ENCODE measurements at regions of chr14 and their contacts with region 1.

Region 1: GRCh38 chr14:65949711-65950516 is 536.3 kb upstream of the CCDC196 start:
- DNase-seq: no peak
- H3K4me3 ChIP-seq: peak overlapping the region; percentile 13
- H3K4me3 Mint-ChIP-seq: peak overlapping the region in 6 of 7 donors; percentile 23 to 61 (median 42)
- H3K27ac ChIP-seq: no peak overlapping the region
- H3K27ac Mint-ChIP-seq: peak overlapping the region in 6 of 8 donors; percentile 3 to 54 (median 34)
- H3K4me1 ChIP-seq: peaks cover 18% of the 10 kb centered on the region
- H3K4me1 Mint-ChIP-seq: peaks cover 32 to 45% (median 38%) of the 10 kb centered on the region in 3 donors
- H3K27me3 ChIP-seq: no peaks in the 10 kb centered on the region
- H3K27me3 Mint-ChIP-seq: peaks cover 0 to 4% of the 10 kb centered on the region in 2 donors

Region 2: DNA sequence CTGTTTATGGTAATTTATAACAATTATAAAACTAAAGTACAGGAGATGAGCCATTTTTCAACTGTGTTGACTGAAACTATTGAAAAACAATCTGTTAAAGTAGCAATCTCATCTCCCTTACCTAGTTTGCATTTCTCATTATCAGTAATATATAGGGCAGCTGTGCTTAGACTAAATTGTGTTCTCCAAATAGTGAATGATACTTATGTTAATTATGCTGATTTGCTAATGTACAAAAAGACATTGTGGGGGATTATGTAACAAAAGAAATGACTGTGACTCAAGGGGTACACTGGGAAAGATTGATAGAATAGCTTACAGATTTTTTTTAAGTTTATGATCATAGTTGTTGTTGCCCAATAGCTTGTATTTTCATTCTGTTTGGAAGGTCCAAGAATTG is 329.7 kb before region 1 on chr14:
- CTCF ChIA-PET with region 1: no interaction called
- POLR2A ChIA-PET with region 1: no interaction called
- DNase-seq: no peak
- H3K4me3 ChIP-seq: no peak overlapping the region
- H3K4me3 Mint-ChIP-seq: no peak overlapping the region
- H3K27ac ChIP-seq: no peak overlapping the region
- H3K27ac Mint-ChIP-seq: peak overlapping the region in 2 of 8 donors; percentile 3 to 46
- H3K4me1 ChIP-seq: no peaks in the 10 kb centered on the region
- H3K4me1 Mint-ChIP-seq: peaks cover 7 to 11% (median 9%) of the 10 kb centered on the region in 3 donors
- H3K27me3 ChIP-seq: no peaks in the 10 kb centered on the region
- H3K27me3 Mint-ChIP-seq: no peaks in the 10 kb centered on the region

Region 3: GRCh38 chr14:65927931-65928356 is 22.0 kb before region 1 on chr14:
- CTCF ChIA-PET with region 1: interaction called, 13 read pairs
- POLR2A ChIA-PET with region 1: no interaction called
- DNase-seq: peak; percentile 44 to 84 (median 67)
- H3K4me3 ChIP-seq: peak overlapping the region; percentile 47
- H3K4me3 Mint-ChIP-seq: peak overlapping the region; percentile 18 to 90 (median 70)
- H3K27ac ChIP-seq: peak overlapping the region; percentile 16
- H3K27ac Mint-ChIP-seq: peak overlapping the region; percentile 73 to 98 (median 86)
- H3K4me1 ChIP-seq: peaks cover 53% of the 10 kb centered on the region
- H3K4me1 Mint-ChIP-seq: peaks cover 67 to 82% (median 77%) of the 10 kb centered on the region in 3 donors
- H3K27me3 ChIP-seq: no peaks in the 10 kb centered on the region
- H3K27me3 Mint-ChIP-seq: peaks cover 0 to 1% of the 10 kb centered on the region in 2 donors

Measured in CD8-positive, alpha-beta memory T cell (primary cell).